PC-3 (cell line): ENCODE measurements at regions of chr11 and their contacts with region 1.

Region 1: GRCh38 chr11:114166897-114167323 is 107.4 kb downstream of the ZBTB16 start:
- DNase-seq: peak; percentile 89
- ATAC-seq: peak; percentile 14
- H3K4me3 ChIP-seq: no peak overlapping the region
- H3K27ac ChIP-seq: no peak overlapping the region
- H3K4me1 ChIP-seq: peaks cover 30% of the 10 kb centered on the region
- H3K27me3 ChIP-seq: peaks cover 87% of the 10 kb centered on the region
- CTCF ChIP-seq: no peak

Region 2: GRCh38 chr11:114132944-114133394 is 33.9 kb before region 1 on chr11:
- CTCF ChIA-PET with region 1: no interaction called
- POLR2A ChIA-PET with region 1: no interaction called
- intact Hi-C with region 1: loop called (anchors 2 kb)
- DNase-seq: peak; percentile 88
- ATAC-seq: peak; percentile 88
- H3K4me3 ChIP-seq: no peak overlapping the region; the same call in 1 of the 2 replicates
- H3K27ac ChIP-seq: no peak overlapping the region
- H3K4me1 ChIP-seq: peaks cover 15% of the 10 kb centered on the region
- H3K27me3 ChIP-seq: peaks cover 76% of the 10 kb centered on the region
- CTCF ChIP-seq: no peak

Region 3: GRCh38 chr11:114257621-114258558 is 91.0 kb after region 1 on chr11:
- CTCF ChIA-PET with region 1: interaction called, 14 read pairs
- POLR2A ChIA-PET with region 1: no interaction called
- intact Hi-C with region 1: no loop called
- DNase-seq: no peak
- ATAC-seq: no peak
- H3K4me3 ChIP-seq: no peak overlapping the region
- H3K27ac ChIP-seq: no peak overlapping the region
- H3K4me1 ChIP-seq: no peaks in the 10 kb centered on the region
- H3K27me3 ChIP-seq: peaks cover 62% of the 10 kb centered on the region
- CTCF ChIP-seq: 0 out of 2 replicates have a peak, but pooled peaks have one; percentile 29